Thyroid gland (tissue), 4 donors: ENCODE measurements at regions of chr1 and their contacts with region 1.

Region 1: DNA sequence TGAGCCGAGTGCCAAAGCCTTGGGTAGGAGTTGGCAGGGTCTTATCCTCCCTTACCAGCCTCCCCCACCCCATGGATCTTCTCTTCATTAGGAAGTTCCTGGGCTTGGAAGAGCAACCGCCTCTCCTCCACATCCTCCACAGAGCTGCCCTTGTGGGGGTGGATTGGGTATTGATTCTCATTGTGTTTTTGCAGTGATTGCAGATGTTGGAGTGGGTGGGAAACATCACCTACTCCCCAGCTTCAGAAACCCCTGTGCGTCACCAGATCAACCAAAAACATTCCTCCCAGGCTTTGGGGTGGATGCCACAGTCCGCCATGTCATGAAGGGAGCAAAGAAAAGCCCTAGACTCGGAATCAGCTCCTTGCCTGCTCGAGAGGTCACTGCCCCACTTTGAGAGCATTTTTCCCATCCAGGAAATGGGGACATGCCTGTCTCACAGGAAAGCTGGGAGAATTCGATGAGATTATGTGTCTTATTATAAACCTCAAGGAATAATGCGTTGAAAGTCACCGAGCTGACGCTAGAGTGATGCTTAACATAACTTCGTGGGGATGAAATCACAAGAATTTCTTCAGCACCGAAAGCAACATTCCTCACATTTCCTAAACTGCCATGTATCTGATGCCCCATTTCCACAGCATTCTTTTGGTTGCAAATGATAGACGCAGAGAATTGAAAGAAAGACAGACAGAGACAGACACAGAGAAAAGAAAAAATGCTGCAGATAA is 44.7 kb upstream of the ZBTB40 start:
- DNase-seq: no peak
- H3K4me3 ChIP-seq: no peak overlapping the region
- H3K27ac ChIP-seq: no peak overlapping the region
- H3K4me1 ChIP-seq: no peaks in the 10 kb centered on the region
- H3K27me3 ChIP-seq: no peaks in the 10 kb centered on the region
- CTCF ChIP-seq: no peak
- POLR2A ChIP-seq: no peak

Region 2: GRCh38 chr1:22259551-22260282 is 147.2 kb before region 1 on chr1:
- intact Hi-C with region 1: loop called (anchors 10 kb)
- DNase-seq: peak; percentile 68 to 69
- H3K4me3 ChIP-seq: no peak overlapping the region
- H3K27ac ChIP-seq: no peak overlapping the region
- H3K4me1 ChIP-seq: peaks cover 7 to 11% of the 10 kb centered on the region in 2 donors
- H3K27me3 ChIP-seq: no peaks in the 10 kb centered on the region
- CTCF ChIP-seq: no peak
- POLR2A ChIP-seq: no peak